ENCODE measurements at regions of chr18 and their contacts with region 1.

Region 1: GRCh38 chr18:3447895-3448837 is 1.8 kb upstream of the TGIF1 start:
- DNase-seq: peak; percentile 89 to 92
- H3K4me3 ChIP-seq: peak overlapping the region; percentile 73 to 99 (median 87)
- H3K27ac ChIP-seq: peak overlapping the region; percentile 99
- H3K4me1 ChIP-seq: peaks cover 6 to 16% (median 11%) of the 10 kb centered on the region in 4 experiments
- H3K27me3 ChIP-seq: no peaks in the 10 kb centered on the region
- CTCF ChIP-seq: no peak
- EP300 ChIP-seq: peak; percentile 14 to 41; a peak in 1 of 3 replicates
- POLR2A ChIP-seq: peak; percentile 44 to 79; a peak in 2 of 3 replicates
- RAD21 ChIP-seq: no peak; a peak in 2 of 4 replicates

Region 2: GRCh38 chr18:3162181-3162580 is 286.0 kb before region 1 on chr18:
- CTCF ChIA-PET with region 1: no interaction called
- POLR2A ChIA-PET with region 1: no interaction called
- DNase-seq: no peak
- H3K4me3 ChIP-seq: no peak overlapping the region
- H3K27ac ChIP-seq: no peak overlapping the region
- H3K4me1 ChIP-seq: no peaks in the 10 kb centered on the region
- H3K27me3 ChIP-seq: no peaks in the 10 kb centered on the region
- CTCF ChIP-seq: no peak
- EP300 ChIP-seq: no peak
- POLR2A ChIP-seq: no peak
- RAD21 ChIP-seq: no peak

Region 3: GRCh38 chr18:3177902-3178687 is 270.1 kb before region 1 on chr18:
- CTCF ChIA-PET with region 1: no interaction called
- POLR2A ChIA-PET with region 1: no interaction called
- DNase-seq: no peak
- H3K4me3 ChIP-seq: no peak overlapping the region
- H3K27ac ChIP-seq: no peak overlapping the region
- H3K4me1 ChIP-seq: no peaks in the 10 kb centered on the region; a peak in 1 of 7 replicates
- H3K27me3 ChIP-seq: no peaks in the 10 kb centered on the region
- CTCF ChIP-seq: no peak
- EP300 ChIP-seq: no peak
- POLR2A ChIP-seq: no peak
- RAD21 ChIP-seq: no peak

Region 4: GRCh38 chr18:3297025-3297984 is 150.9 kb before region 1 on chr18:
- CTCF ChIA-PET with region 1: interaction called, 5 read pairs
- POLR2A ChIA-PET with region 1: interaction called, 15 read pairs
- DNase-seq: peak; percentile 96
- H3K4me3 ChIP-seq: peak overlapping the region; percentile 71 to 98 (median 90)
- H3K27ac ChIP-seq: peak overlapping the region; percentile 95
- H3K4me1 ChIP-seq: no peaks in the 10 kb centered on the region
- H3K27me3 ChIP-seq: no peaks in the 10 kb centered on the region
- CTCF ChIP-seq: peak; percentile 75 to 100 (median 92); a peak in 3 of 4 replicates
- EP300 ChIP-seq: peak in 1 of 2 experiments; percentile 64; a peak in 1 of 3 replicates
- POLR2A ChIP-seq: peak; percentile 92 to 99
- RAD21 ChIP-seq: peak; percentile 56 to 58

Region 5: DNA sequence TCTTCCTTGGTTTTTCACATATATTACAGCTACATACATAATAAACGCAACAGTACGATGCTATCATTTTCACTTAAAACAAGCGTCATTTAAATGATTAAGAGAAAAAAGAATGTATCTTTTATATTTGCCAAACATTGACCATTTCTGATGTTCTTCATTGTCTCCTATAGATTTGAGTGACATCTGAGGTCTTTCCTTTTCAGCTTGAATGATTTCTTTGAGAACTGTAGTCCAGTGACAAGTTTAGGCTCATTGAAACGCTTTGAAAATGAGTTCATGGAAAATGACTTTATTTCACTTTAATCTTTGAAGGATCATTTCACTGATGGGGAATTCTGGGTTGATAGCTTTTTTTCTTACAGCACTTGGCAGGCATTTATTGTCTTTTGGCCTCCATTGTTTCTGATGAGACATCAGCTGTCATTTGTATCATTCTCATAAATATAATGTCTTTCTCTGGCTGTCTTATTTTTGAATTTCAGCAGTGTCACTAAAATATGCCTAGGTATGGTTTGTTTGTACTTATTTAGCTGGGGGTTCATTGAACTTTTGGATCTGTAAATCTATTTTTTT is 12.7 kb after region 1 on chr18:
- CTCF ChIA-PET with region 1: interaction called, 56 read pairs
- POLR2A ChIA-PET with region 1: interaction called, 58 read pairs
- DNase-seq: no peak
- H3K4me3 ChIP-seq: no peak overlapping the region
- H3K27ac ChIP-seq: no peak overlapping the region
- H3K4me1 ChIP-seq: peaks cover 11 to 24% (median 20%) of the 10 kb centered on the region in 4 experiments; a peak in 6 of 7 replicates
- H3K27me3 ChIP-seq: no peaks in the 10 kb centered on the region
- CTCF ChIP-seq: no peak
- EP300 ChIP-seq: no peak
- POLR2A ChIP-seq: no peak
- RAD21 ChIP-seq: no peak

Region 6: DNA sequence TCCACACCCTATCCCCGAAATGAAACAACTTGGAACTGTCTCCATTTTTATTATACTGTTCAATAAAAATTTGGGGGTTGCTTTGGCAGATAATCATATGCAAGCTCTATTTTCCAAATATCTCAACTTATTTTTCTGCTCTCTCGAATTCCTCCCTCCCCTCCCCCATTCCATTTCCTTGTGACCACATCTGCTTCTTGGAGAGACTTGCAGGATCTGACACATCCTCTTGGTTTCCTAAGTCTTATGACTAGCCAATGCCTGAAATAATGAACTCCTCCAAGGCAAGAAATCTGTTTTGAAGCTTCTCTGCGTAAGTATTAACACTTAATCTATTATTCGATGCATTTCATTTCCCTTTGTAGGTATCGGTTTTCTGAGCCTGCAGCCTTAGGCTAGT is 17.9 kb after region 1 on chr18:
- CTCF ChIA-PET with region 1: interaction called, 56 read pairs
- POLR2A ChIA-PET with region 1: interaction called, 58 read pairs
- DNase-seq: no peak
- H3K4me3 ChIP-seq: no peak overlapping the region
- H3K27ac ChIP-seq: no peak overlapping the region
- H3K4me1 ChIP-seq: peaks cover 7 to 19% (median 9%) of the 10 kb centered on the region in 4 experiments; a peak in 6 of 7 replicates
- H3K27me3 ChIP-seq: no peaks in the 10 kb centered on the region
- CTCF ChIP-seq: no peak
- EP300 ChIP-seq: no peak
- POLR2A ChIP-seq: no peak
- RAD21 ChIP-seq: no peak

Region 7: DNA sequence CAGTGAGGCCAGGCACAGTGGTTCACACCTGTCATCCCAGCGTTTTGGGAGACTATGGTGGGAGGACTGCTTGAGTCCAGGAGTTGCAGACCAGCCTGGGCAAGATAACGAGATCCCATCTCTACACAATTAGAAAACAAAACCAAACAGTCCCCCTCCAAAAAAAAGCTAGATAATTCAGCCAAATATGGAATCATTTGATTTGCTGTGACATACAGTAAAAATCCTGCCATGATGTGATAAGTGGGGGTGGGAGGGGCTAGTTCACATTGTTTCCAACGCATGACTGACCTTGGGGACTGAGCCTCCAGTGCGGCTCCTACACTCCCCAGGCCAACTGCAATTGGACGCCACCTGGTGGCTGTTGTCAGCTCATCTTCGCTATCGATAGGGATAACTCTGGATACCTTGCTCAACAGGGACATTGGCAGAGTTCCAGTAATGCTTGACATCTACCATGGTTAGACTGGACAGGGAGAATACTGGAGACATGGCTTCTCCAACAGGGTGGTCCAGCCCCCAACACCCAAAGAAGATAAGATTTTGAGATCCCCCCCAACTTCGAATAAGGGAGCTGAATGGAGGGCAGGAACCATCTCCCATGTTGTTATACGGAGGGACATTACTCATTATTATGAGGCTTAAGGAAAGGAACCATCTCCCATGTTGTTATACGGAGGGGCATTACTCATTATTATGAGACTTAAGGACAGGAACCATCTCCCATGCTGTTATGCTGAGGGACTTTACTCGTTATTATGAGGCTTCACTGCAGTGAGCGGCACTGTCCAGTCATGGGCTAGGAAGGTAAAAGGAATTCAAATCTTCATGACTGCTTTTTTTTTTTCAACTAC is 137.7 kb after region 1 on chr18:
- CTCF ChIA-PET with region 1: interaction called, 28 read pairs
- POLR2A ChIA-PET with region 1: interaction called, 6 read pairs
- DNase-seq: peak; percentile 63 to 84
- H3K4me3 ChIP-seq: no peak overlapping the region
- H3K27ac ChIP-seq: no peak overlapping the region
- H3K4me1 ChIP-seq: peaks cover 3 to 13% (median 9%) of the 10 kb centered on the region in 4 experiments
- H3K27me3 ChIP-seq: no peaks in the 10 kb centered on the region
- CTCF ChIP-seq: peak; percentile 86 to 96 (median 91)
- EP300 ChIP-seq: no peak
- POLR2A ChIP-seq: no peak
- RAD21 ChIP-seq: peak; percentile 88 to 92

Region 8: DNA sequence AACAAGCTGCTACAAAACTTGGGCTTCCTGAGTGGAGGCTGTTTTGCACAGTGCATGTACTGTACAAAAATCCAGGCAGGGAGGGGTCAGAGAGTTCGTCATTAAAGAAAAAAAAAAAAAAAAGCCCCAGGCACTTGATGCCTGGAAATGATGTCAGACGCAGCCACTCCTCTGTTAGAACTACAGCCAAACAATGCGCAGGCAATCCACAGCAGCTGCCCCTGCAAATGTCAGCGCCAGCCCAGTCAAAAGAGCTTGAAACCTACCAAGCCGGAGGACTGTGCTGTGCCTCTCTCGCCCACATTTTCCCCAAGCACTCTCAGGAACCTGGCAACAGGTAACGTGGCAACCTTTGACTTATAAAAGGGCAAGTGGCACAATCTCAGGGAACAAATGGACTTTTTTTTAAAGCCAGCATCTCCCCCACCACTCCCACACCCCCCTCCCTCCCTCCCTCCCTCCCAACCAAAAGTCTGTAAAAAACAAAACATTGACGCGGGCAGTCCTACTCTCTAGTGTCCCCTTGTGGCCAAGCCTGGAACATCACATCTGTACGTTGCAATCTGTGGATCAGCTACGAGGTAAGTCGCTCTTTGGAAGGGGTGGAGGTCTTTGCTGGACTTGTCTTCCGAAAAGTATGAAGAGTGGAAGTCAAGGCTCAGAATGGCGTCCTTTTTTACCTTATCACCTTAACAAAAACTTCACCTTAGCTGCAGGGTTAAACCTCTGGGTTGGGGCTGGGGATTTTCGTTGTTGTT is 145.9 kb after region 1 on chr18:
- CTCF ChIA-PET with region 1: interaction called, 23 read pairs
- POLR2A ChIA-PET with region 1: interaction called, 6 read pairs
- DNase-seq: peak; percentile 77 to 95
- H3K4me3 ChIP-seq: peak overlapping the region; percentile 17 to 53 (median 46); a peak in 6 of 8 replicates
- H3K27ac ChIP-seq: no peak overlapping the region; the same call in 1 of the 2 replicates
- H3K4me1 ChIP-seq: peaks cover 15 to 35% (median 24%) of the 10 kb centered on the region in 4 experiments
- H3K27me3 ChIP-seq: peaks cover 0 to 15% (median 8%) of the 10 kb centered on the region in 4 experiments; a peak in 6 of 7 replicates
- CTCF ChIP-seq: peak; percentile 73 to 89 (median 88)
- EP300 ChIP-seq: no peak
- POLR2A ChIP-seq: no peak
- RAD21 ChIP-seq: peak; percentile 71 to 75

Region 9: DNA sequence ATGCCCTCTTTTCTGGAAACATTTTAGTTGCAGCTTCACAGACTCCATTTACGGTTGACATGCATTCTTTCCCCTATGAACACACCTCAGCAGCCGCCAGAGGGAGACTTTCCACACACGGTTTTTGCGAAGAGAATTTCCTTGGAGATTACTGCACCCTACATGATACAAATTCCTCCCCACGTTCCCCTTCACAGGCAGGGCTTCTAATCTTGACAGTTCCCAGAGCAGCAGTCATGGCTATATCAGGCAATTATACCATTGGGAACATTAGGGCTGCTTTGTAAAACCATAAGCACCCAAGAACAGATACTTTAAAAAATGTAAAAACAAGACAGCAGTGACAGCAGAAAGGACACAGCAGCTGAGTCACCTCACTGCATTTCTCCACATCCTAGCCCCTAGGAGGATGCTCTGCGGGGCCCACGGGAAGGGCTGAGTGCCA is 255.6 kb after region 1 on chr18:
- CTCF ChIA-PET with region 1: no interaction called
- POLR2A ChIA-PET with region 1: no interaction called
- DNase-seq: peak in 1 of 2 experiments; percentile 65
- H3K4me3 ChIP-seq: no peak overlapping the region
- H3K27ac ChIP-seq: no peak overlapping the region
- H3K4me1 ChIP-seq: 0 out of 7 replicates have a peak, but pooled peaks cover 0 to 2% (median 0%) of the 10 kb centered on the region in 4 experiments
- H3K27me3 ChIP-seq: no peaks in the 10 kb centered on the region
- CTCF ChIP-seq: peak; percentile 51 to 76 (median 73)
- EP300 ChIP-seq: no peak
- POLR2A ChIP-seq: no peak
- RAD21 ChIP-seq: peak; percentile 75 to 79